MCF 10A (cell line): ENCODE measurements at regions of chr20 and their contacts with region 1.

Region 1: GRCh38 chr20:17968366-17969279 is at the starts of genes MGME1 and SNX5:
- DNase-seq: peak; percentile 99
- H3K4me3 Mint-ChIP-seq: peak within 1 kb of the TSS; percentile 95
- H3K27ac Mint-ChIP-seq: peak within 1 kb of the TSS; percentile 98
- H3K4me1 Mint-ChIP-seq: peaks cover 39% of the 10 kb centered on the region
- H3K27me3 Mint-ChIP-seq: no peaks in the 10 kb centered on the region
- CTCF ChIP-seq: no peak
- total RNA-seq, gene MGME1: 18.0 and 24.0 TPM in 2 replicates
- total RNA-seq, gene SNX5: 108 and 170 TPM in 2 replicates

Region 2: GRCh38 chr20:17558154-17558940 is 410.3 kb before region 1 on chr20:
- CTCF ChIA-PET with region 1: interaction called, 3 read pairs
- POLR2A ChIA-PET with region 1: interaction called, 18 read pairs
- intact Hi-C with region 1: no loop called
- DNase-seq: peak; percentile 89
- H3K4me3 Mint-ChIP-seq: peak overlapping the region; percentile 64
- H3K27ac Mint-ChIP-seq: peak overlapping the region; percentile 97
- H3K4me1 Mint-ChIP-seq: peaks cover 36% of the 10 kb centered on the region
- H3K27me3 Mint-ChIP-seq: no peaks in the 10 kb centered on the region
- CTCF ChIP-seq: no peak

Region 3: GRCh38 chr20:17952692-17953684 is 15.6 kb before region 1 on chr20:
- CTCF ChIA-PET with region 1: interaction called, 24 read pairs
- POLR2A ChIA-PET with region 1: interaction called, 139 read pairs
- intact Hi-C with region 1: no loop called
- DNase-seq: no peak
- H3K4me3 Mint-ChIP-seq: no peak overlapping the region
- H3K27ac Mint-ChIP-seq: no peak overlapping the region
- H3K4me1 Mint-ChIP-seq: peaks cover 9% of the 10 kb centered on the region
- H3K27me3 Mint-ChIP-seq: no peaks in the 10 kb centered on the region
- CTCF ChIP-seq: no peak

Region 4: DNA sequence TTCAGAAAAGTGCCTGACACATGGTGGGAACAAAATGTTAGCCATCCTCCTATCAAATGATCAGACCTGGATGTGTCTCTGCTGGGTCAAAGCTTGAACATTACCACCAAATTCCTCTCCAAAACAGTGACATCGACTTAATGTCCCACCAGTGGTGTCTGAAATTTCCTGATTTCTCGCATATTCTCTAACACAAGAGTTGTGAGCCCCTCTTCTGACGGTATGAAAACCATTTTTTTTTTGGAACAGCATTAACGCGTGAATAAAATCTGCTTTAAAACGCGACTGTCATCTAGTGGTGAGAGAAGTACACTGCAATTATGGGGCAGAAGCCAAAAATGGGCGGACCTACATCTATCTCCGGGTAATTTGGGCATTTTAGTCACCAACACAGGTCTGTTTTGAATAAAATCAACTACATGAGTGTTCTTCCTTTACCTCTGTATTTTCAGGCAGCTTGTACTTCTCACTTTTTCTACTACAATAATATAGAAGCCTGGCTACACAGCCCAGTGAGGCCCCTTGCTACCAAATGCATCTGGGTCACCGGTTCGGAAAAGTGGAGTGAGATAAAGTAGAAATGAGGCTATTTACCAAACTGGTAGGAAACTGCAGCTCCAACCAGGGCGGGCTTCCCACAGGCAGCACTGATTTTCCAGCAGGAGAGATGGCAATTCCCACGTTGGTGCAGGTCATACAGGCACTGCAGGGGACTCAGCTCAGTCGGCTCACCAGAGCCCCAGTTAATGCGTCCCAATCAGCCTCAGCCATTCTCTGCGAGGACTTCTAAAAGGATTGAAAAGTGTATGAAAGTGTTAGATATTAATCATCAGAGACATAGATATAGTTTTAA is 27.6 kb after region 1 on chr20:
- CTCF ChIA-PET with region 1: interaction called, 68 read pairs
- POLR2A ChIA-PET with region 1: interaction called, 46 read pairs
- intact Hi-C with region 1: loop called (anchors 1 kb)
- DNase-seq: peak; percentile 75
- H3K4me3 Mint-ChIP-seq: no peak overlapping the region
- H3K27ac Mint-ChIP-seq: no peak overlapping the region
- H3K4me1 Mint-ChIP-seq: peaks cover 14% of the 10 kb centered on the region
- H3K27me3 Mint-ChIP-seq: no peaks in the 10 kb centered on the region
- CTCF ChIP-seq: peak; percentile 89

Region 5: GRCh38 chr20:18252597-18253451 is 284.2 kb after region 1 on chr20:
- CTCF ChIA-PET with region 1: interaction called, 3 read pairs
- POLR2A ChIA-PET with region 1: interaction called, 15 read pairs
- intact Hi-C with region 1: no loop called
- DNase-seq: peak; percentile 91
- H3K4me3 Mint-ChIP-seq: peak overlapping the region; percentile 52
- H3K27ac Mint-ChIP-seq: peak overlapping the region; percentile 100
- H3K4me1 Mint-ChIP-seq: peaks cover 30% of the 10 kb centered on the region
- H3K27me3 Mint-ChIP-seq: no peaks in the 10 kb centered on the region
- CTCF ChIP-seq: no peak

Region 6: GRCh38 chr20:18507218-18508021 is 538.8 kb after region 1 on chr20 and contains the start of gene SEC23B:
- CTCF ChIA-PET with region 1: no interaction called
- POLR2A ChIA-PET with region 1: interaction called, 12 read pairs
- intact Hi-C with region 1: no loop called
- DNase-seq: peak; percentile 98
- H3K4me3 Mint-ChIP-seq: peak within 1 kb of the TSS; percentile 100
- H3K27ac Mint-ChIP-seq: peak within 1 kb of the TSS; percentile 100
- H3K4me1 Mint-ChIP-seq: peaks cover 14% of the 10 kb centered on the region
- H3K27me3 Mint-ChIP-seq: no peaks in the 10 kb centered on the region
- CTCF ChIP-seq: no peak
- total RNA-seq, gene SEC23B: 139 TPM in 2 replicates